ENCODE measurements at regions of chr2 and their contacts with region 1.

Region 1: DNA sequence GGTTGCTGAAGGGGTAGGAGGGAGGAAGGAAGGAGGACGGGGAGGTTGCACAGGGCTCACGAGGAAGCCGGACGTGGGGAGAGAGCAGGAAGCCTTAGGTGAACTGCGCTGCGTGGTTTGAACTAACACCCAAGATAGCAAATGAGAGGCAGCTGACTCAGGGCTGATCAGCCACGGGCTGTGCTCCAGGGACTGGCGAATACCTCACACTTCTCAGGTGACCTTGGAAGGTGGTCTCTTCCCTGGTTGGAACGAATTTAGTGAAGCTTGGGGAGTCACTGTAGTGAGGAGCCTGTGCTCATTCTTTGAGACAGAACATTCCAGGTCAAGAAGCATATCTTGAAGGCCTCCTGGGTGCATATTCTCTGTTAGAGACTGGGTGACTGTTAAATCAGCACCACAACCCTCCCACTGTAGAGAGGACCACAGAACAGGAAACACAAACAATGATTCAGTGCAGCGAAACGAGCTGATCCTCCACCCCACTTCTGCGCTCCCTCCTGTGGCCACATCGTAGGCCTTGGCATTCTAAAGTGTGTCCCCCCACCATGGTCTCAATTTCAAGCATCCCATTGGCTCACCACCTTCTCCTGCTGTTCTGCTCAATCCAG is 33.8 kb downstream of the TOGARAM2 start:
- DNase-seq: peak; percentile 64
- H3K4me3 Mint-ChIP-seq: peak overlapping the region; percentile 83
- H3K27ac Mint-ChIP-seq: peak overlapping the region; percentile 99
- H3K4me1 Mint-ChIP-seq: peaks cover 62% of the 10 kb centered on the region
- H3K27me3 Mint-ChIP-seq: no peaks in the 10 kb centered on the region

Region 2: GRCh38 chr2:29110916-29111535 is 96.1 kb after region 1 on chr2:
- intact Hi-C with region 1: loop called (anchors 2 kb)
- DNase-seq: no peak
- H3K4me3 Mint-ChIP-seq: no peak overlapping the region
- H3K27ac Mint-ChIP-seq: no peak overlapping the region
- H3K4me1 Mint-ChIP-seq: peaks cover 17% of the 10 kb centered on the region
- H3K27me3 Mint-ChIP-seq: peaks cover 4% of the 10 kb centered on the region

Region 3: DNA sequence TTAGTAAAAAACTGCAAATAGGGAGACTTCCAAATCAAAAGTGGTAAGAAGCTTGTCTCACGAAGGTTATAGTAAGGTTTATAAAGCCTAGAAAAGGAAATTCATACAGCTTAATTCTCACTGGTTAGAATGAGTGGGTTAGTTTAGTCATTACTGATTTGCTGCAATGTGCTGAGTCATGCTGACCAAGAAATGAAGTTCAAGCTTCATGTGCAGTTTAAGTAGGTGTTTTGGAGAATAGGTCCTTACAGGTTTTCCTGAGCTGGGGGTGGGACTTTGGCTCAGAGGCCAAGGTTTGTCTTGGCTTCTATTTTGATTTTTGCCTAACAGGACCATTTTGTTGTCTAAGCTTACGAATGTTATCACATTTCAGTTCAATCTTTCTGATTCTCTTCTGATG is 115.4 kb after region 1 on chr2:
- intact Hi-C with region 1: loop called (anchors 1 kb)
- DNase-seq: no peak
- H3K4me3 Mint-ChIP-seq: no peak overlapping the region
- H3K27ac Mint-ChIP-seq: peak overlapping the region; percentile 10
- H3K4me1 Mint-ChIP-seq: peaks cover 26% of the 10 kb centered on the region
- H3K27me3 Mint-ChIP-seq: no peaks in the 10 kb centered on the region

Region 4: DNA sequence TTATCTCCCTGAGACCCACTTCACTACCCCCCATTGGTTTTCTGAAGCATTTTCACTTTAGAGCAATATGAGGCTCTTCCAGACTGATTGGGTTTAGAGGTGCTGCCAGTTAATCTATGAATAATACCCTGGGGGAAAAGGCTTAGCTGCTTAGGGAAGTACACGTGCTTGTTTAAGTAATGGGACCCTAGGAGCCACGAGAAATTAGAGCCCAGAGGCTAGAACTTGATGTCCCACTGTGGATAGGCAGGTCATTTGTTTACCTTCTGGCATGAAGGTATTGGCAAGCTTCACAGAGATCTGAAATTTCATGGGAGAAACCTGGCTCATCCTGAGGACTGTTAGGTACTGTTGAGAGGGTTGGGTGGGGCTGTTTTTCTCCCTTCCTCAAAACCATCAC is 160.0 kb after region 1 on chr2:
- intact Hi-C with region 1: no loop called
- DNase-seq: no peak
- H3K4me3 Mint-ChIP-seq: no peak overlapping the region
- H3K27ac Mint-ChIP-seq: no peak overlapping the region
- H3K4me1 Mint-ChIP-seq: no peaks in the 10 kb centered on the region
- H3K27me3 Mint-ChIP-seq: no peaks in the 10 kb centered on the region

Region 5: GRCh38 chr2:29196792-29197788 is 182.2 kb after region 1 on chr2:
- intact Hi-C with region 1: loop called (anchors 5 kb)
- DNase-seq: peak; percentile 62
- H3K4me3 Mint-ChIP-seq: no peak overlapping the region
- H3K27ac Mint-ChIP-seq: no peak overlapping the region
- H3K4me1 Mint-ChIP-seq: no peaks in the 10 kb centered on the region
- H3K27me3 Mint-ChIP-seq: no peaks in the 10 kb centered on the region

Measured in activated T-helper 2 cell treated with anti-CD3 and anti-CD28 coated beads, Interferon-gamma antibody, Interleukin-2, Interleukin-4, amounts not matched to agents 10 μg/mL and 5 μg/mL and 100 μg/mL, durations not matched to agents 14 hours and 24 hours and 36 hours (primary cell).